PC-9 (cell line): ENCODE measurements at regions of chr3 and their contacts with region 1.

Region 1: DNA sequence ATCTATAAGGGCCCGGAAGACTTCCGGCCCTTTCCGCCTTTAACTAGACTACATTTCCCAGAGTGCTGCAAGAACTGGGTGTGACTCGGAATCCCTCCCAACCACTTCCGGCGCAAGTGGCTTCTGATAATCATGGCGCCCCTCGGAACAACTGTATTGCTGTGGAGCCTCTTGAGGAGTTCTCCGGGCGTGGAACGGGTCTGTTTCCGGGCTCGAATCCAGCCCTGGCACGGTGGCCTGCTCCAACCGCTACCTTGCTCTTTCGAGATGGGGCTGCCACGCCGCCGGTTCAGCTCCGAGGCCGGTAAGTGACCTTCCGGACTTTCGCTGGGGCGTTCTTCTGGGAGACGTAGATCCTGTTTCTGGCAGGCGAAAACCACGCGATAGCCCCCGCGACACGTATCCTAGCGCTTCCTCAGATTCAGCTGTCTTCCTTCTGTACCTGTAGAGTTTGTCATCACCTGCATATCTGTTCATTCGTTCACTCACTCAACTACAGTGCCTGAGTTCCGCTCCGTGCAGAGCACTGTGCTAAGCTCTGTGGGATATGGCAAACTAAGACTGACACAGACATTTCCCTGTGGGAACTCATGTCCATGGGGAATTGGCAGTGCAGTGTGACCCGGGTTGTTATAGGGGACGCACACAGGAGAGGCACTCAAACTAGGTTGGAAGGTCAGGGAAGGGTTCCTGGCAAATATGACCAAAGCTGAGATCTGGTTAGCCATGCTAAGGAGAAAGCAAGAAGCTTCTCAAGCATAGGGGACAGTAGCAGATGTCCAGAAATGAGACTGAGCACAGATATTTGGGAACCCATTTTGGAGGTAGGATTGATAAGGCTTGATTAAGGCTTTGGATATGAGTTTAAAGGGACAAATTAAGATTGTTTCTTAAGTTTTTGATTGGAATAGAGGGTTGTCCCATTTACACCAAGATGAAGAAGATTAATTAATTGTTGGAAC is at the start of gene MRPS22:
- DNase-seq: peak; percentile 80 to 82
- H3K4me3 ChIP-seq: peak within 1 kb of the TSS; percentile 83
- H3K27ac ChIP-seq: peak within 1 kb of the TSS; percentile 75
- H3K4me1 ChIP-seq: peaks cover 8% of the 10 kb centered on the region
- H3K27me3 ChIP-seq: no peaks in the 10 kb centered on the region
- CTCF ChIP-seq: no peak
- total RNA-seq, gene MRPS22: 64.8 and 68.0 TPM in 2 replicates

Region 2: DNA sequence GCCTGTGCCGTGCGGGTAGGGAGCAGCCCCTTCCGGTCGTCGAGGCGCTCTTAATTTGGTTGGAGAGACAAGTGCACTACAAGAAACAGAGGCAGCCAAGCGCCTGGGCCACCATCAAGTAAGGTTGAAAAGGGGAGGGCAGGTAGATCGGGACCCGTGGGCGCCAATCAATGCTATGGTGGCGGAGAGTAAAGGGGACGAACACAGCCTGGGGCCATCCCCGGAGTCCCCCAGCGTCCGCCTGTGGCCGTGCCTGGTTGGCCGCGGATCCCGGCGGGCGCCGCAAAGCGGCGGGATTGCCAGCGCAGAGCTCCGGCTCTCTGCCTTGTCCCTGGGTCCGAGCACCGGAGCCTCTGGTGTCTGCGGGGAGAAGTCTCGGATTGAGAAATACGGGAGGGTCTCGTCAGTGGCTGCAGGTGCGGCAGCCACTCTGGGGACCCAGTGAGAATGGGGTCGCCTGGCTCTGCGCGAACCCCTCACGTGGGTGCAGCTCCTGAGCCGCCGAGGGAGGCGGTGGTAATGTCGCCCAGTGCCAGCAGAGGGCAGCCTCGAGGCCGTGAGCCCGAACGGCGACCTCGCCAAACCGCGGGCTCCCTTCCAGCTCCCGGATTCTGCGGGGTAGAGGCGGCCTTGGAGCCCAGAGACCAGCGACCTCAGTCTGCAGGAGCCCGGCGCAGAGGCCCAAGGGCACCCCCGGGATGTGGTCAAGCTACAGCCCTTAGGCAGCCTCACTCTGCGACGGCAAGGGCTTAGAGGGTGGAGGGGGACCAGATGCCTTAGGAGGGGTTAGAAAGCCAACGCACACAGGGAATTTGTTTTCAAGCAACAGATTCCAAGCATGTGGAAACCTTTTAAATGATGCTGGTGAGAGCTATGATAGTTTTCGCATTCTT is 408.1 kb before region 1 on chr3:
- CTCF ChIA-PET with region 1: interaction called, 11 read pairs
- POLR2A ChIA-PET with region 1: no interaction called
- intact Hi-C with region 1: loop called (anchors 5 kb)
- DNase-seq: peak in 1 of 2 experiments; percentile 81
- H3K4me3 ChIP-seq: peak overlapping the region; percentile 76
- H3K27ac ChIP-seq: no peak overlapping the region
- H3K4me1 ChIP-seq: 0 out of 2 replicates have a peak, but pooled peaks cover 6% of the 10 kb centered on the region
- H3K27me3 ChIP-seq: no peaks in the 10 kb centered on the region
- CTCF ChIP-seq: peak; percentile 88

Region 3: DNA sequence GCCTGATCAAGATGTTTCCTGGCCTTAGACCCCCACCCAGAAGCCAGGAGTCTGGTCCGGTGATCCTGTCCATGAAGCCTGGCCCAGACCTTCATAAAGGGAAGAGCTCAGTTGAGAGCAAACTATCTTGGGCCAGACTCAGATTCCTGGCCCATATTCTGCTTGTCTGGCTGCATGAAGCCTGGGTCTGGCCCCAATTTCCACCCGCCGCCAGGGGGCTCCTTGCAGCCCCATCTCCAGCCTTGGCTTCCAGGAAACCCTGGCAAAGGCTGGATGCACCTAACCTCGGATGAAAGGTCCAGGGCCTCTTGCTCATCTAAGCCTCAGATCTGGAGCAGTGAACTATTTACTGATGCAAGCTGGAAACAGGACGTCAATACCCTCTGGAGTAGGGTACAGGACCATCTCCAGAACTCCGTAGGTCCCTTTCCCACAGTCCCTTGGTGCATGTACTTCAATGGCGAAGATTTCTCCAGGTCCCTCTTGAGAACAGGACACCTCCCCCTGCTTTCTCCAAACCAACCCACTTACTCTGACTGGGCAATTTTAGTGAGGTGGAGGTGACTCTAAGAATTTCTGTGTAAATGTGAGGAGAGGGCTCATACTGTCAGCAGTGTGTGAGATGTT is 402.8 kb before region 1 on chr3:
- CTCF ChIA-PET with region 1: interaction called, 11 read pairs
- POLR2A ChIA-PET with region 1: no interaction called
- intact Hi-C with region 1: loop called (anchors 5 kb)
- DNase-seq: peak; percentile 40 to 55
- H3K4me3 ChIP-seq: no peak overlapping the region
- H3K27ac ChIP-seq: no peak overlapping the region
- H3K4me1 ChIP-seq: no peaks in the 10 kb centered on the region
- H3K27me3 ChIP-seq: no peaks in the 10 kb centered on the region
- CTCF ChIP-seq: peak; percentile 68

Region 4: DNA sequence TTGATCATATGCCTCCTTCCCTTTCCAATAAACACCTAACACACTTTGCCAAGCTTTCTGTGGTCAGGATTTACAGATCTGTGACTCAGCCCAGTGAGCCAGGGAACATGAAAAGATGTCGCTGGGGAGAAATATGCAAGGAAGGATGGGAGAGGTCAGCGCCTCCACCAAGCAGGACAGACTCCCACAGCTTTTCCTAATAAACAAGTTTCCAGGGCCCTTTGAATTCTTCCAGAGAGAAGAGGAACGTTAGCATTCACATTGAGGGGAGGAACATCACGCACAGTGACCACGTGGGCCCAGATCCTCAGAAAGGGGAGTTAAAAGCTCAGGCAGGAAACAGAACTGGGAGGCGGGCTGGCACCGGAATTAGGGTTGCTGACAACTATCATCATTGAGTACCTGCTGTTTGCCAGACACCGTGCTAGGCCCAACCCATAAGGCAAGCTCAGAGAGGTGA is 33.7 kb before region 1 on chr3:
- CTCF ChIA-PET with region 1: no interaction called
- POLR2A ChIA-PET with region 1: no interaction called
- intact Hi-C with region 1: loop called (anchors 2 kb)
- DNase-seq: peak; percentile 59 to 85
- H3K4me3 ChIP-seq: no peak overlapping the region
- H3K27ac ChIP-seq: peak overlapping the region; percentile 58
- H3K4me1 ChIP-seq: peaks cover 58% of the 10 kb centered on the region
- H3K27me3 ChIP-seq: no peaks in the 10 kb centered on the region
- CTCF ChIP-seq: no peak

Region 5: DNA sequence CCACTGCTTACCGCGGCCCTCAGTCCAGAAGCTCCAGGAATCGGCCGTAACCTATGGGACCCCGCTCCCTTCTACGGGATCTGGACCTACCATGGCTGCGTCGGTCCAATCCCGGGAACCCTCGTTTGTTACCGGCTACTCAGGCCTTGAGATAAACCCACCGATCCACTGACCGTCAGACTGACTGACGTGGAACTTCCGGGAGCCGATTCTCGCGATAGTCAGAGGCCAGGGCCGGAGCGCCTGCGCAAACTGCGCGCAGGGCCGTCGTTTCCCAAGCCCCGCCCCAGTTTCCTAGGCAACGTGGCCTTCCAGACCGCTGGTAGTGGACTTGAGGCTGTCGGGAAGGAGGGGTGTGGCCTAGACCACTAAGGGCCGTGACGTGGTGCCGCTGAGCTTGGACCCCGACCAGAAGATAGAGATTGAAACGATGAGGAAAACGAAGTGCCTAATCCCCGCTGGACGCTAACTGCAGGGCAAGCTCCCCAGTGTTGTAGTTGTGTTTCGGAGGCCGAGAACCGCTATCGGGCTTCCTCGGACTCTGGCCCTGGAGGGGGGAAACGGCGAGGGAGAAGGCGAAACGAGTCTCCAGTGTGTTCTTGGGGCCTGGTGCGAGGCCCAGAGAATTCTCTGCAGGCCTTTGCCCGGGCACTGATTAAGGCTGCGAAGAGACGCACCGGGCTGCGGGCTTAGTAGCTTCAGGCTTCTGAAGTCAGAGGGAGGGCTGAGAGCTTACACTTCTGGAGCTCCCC is 45.5 kb after region 1 on chr3 and contains the start of gene COPB2:
- CTCF ChIA-PET with region 1: no interaction called
- POLR2A ChIA-PET with region 1: no interaction called
- intact Hi-C with region 1: loop called (anchors 1 kb)
- DNase-seq: peak; percentile 96 to 100
- H3K4me3 ChIP-seq: peak within 1 kb of the TSS; percentile 78
- H3K27ac ChIP-seq: peak within 1 kb of the TSS; percentile 88
- H3K4me1 ChIP-seq: peaks cover 20% of the 10 kb centered on the region
- H3K27me3 ChIP-seq: no peaks in the 10 kb centered on the region
- CTCF ChIP-seq: no peak
- total RNA-seq, gene COPB2: 147 and 156 TPM in 2 replicates

Region 6: GRCh38 chr3:140365872-140366697 is 1021.9 kb after region 1 on chr3:
- CTCF ChIA-PET with region 1: no interaction called
- POLR2A ChIA-PET with region 1: no interaction called
- intact Hi-C with region 1: no loop called
- DNase-seq: peak in 1 of 2 experiments; percentile 16
- H3K4me3 ChIP-seq: no peak overlapping the region
- H3K27ac ChIP-seq: no peak overlapping the region
- H3K4me1 ChIP-seq: no peaks in the 10 kb centered on the region
- H3K27me3 ChIP-seq: no peaks in the 10 kb centered on the region
- CTCF ChIP-seq: no peak